CD8-positive, alpha-beta T cell (primary cell): ENCODE measurements at regions of chr19 and their contacts with region 1.

Region 1: GRCh38 chr19:43934985-43935708 is at the start of gene ZNF45:
- DNase-seq: peak; percentile 68 to 94 (median 88)
- ATAC-seq: peak; percentile 94
- H3K4me3 ChIP-seq: peak within 1 kb of the TSS; percentile 90 to 96
- H3K4me3 Mint-ChIP-seq: peak within 1 kb of the TSS; percentile 96
- H3K27ac ChIP-seq: peak within 1 kb of the TSS; percentile 59 to 85
- H3K27ac Mint-ChIP-seq: peak within 1 kb of the TSS; percentile 90
- H3K4me1 ChIP-seq: peaks cover 13% of the 10 kb centered on the region
- H3K4me1 Mint-ChIP-seq: peaks cover 27% of the 10 kb centered on the region
- H3K27me3 ChIP-seq: no peaks in the 10 kb centered on the region
- H3K27me3 Mint-ChIP-seq: peaks cover 2% of the 10 kb centered on the region
- CTCF ChIP-seq: no peak
- total RNA-seq, gene ZNF45: 6.2 to 7.8 TPM

Region 2: GRCh38 chr19:43901395-43902390 is 33.5 kb before region 1 on chr19:
- CTCF ChIA-PET with region 1: no interaction called
- POLR2A ChIA-PET with region 1: no interaction called
- intact Hi-C with region 1: loop called (anchors 1 to 2 kb)
- DNase-seq: peak; percentile 31 to 79 (median 65)
- ATAC-seq: peak; percentile 94
- H3K4me3 ChIP-seq: peak overlapping the region; percentile 55 to 78
- H3K4me3 Mint-ChIP-seq: peak overlapping the region; percentile 91
- H3K27ac ChIP-seq: no peak overlapping the region
- H3K27ac Mint-ChIP-seq: peak overlapping the region; percentile 82
- H3K4me1 ChIP-seq: no peaks in the 10 kb centered on the region
- H3K4me1 Mint-ChIP-seq: peaks cover 26% of the 10 kb centered on the region
- H3K27me3 ChIP-seq: no peaks in the 10 kb centered on the region
- H3K27me3 Mint-ChIP-seq: no peaks in the 10 kb centered on the region
- CTCF ChIP-seq: no peak

Region 3: DNA sequence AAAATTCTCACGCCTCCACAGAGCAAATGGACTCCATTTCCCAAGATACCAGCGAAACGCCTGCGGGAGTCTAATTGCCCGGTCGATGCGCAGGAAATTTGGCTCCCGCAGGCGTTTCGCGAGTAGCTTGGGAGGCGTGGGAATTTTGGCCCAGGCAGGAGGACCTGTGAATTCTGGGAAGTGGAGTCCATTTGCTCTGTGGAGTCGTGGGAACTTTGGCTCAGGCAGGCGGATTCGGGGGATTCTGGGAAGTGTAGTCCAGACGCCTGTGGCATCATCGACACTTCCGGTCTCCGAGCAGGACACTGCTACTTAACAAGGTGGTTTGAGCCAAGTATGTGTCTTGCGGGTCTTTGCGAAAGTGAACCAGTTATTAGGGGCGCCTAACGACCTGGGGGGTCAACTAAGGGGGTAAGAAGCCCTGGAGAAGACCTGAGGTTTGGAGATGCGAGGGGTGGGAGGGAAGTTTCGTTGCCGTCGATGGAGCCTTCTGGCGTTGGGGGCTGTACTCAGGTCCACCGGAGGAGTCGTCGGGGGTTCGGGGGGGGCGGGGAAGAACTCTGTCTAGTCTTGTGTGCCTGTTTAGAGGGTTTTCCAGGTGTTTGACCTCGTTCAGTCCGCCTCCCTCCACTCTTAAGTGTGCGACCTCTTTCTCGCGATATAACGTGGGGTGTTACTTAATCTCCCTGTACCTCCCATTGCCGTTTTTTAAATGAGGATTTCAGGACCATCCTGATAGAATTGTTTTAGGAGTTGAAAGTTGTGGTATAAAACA is 49.0 kb after region 1 on chr19 and contains the start of gene ZNF155:
- CTCF ChIA-PET with region 1: no interaction called
- POLR2A ChIA-PET with region 1: no interaction called
- intact Hi-C with region 1: loop called (anchors 1 kb)
- DNase-seq: peak; percentile 28 to 89 (median 64)
- ATAC-seq: peak; percentile 86
- H3K4me3 ChIP-seq: peak within 1 kb of the TSS; percentile 76 to 92
- H3K4me3 Mint-ChIP-seq: peak within 1 kb of the TSS; percentile 96
- H3K27ac ChIP-seq: peak within 1 kb of the TSS; percentile 61 to 65
- H3K27ac Mint-ChIP-seq: peak within 1 kb of the TSS; percentile 92
- H3K4me1 ChIP-seq: no peaks in the 10 kb centered on the region
- H3K4me1 Mint-ChIP-seq: peaks cover 15% of the 10 kb centered on the region
- H3K27me3 ChIP-seq: no peaks in the 10 kb centered on the region
- H3K27me3 Mint-ChIP-seq: no peaks in the 10 kb centered on the region
- CTCF ChIP-seq: no peak
- total RNA-seq, gene ZNF155: 3.4 to 3.5 TPM

Region 4: GRCh38 chr19:44025217-44025936 is 90.2 kb after region 1 on chr19 and contains the start of gene ZNF222:
- CTCF ChIA-PET with region 1: no interaction called
- POLR2A ChIA-PET with region 1: interaction called, 3 read pairs
- intact Hi-C with region 1: loop called in 1 of 2 experiments (anchors 5 kb)
- DNase-seq: peak; percentile 34 to 89 (median 75)
- ATAC-seq: peak; percentile 97
- H3K4me3 ChIP-seq: peak within 1 kb of the TSS; percentile 84 to 92
- H3K4me3 Mint-ChIP-seq: peak within 1 kb of the TSS; percentile 95
- H3K27ac ChIP-seq: peak within 1 kb of the TSS; percentile 47 to 61
- H3K27ac Mint-ChIP-seq: peak within 1 kb of the TSS; percentile 91
- H3K4me1 ChIP-seq: peaks cover 12% of the 10 kb centered on the region
- H3K4me1 Mint-ChIP-seq: peaks cover 30% of the 10 kb centered on the region
- H3K27me3 ChIP-seq: no peaks in the 10 kb centered on the region
- H3K27me3 Mint-ChIP-seq: peaks cover 1% of the 10 kb centered on the region
- CTCF ChIP-seq: no peak
- total RNA-seq, gene ZNF222: 7.7 TPM

Region 5: GRCh38 chr19:44071824-44072542 is 136.8 kb after region 1 on chr19 and contains the start of gene ZNF284:
- CTCF ChIA-PET with region 1: no interaction called
- POLR2A ChIA-PET with region 1: no interaction called
- intact Hi-C with region 1: loop called (anchors 1 kb)
- DNase-seq: peak; percentile 60 to 93 (median 83)
- ATAC-seq: peak; percentile 99
- H3K4me3 ChIP-seq: peak within 1 kb of the TSS; percentile 65 to 73
- H3K4me3 Mint-ChIP-seq: peak within 1 kb of the TSS; percentile 91
- H3K27ac ChIP-seq: peak within 1 kb of the TSS; percentile 2 to 59
- H3K27ac Mint-ChIP-seq: peak within 1 kb of the TSS; percentile 79
- H3K4me1 ChIP-seq: peaks cover 16% of the 10 kb centered on the region
- H3K4me1 Mint-ChIP-seq: peaks cover 36% of the 10 kb centered on the region
- H3K27me3 ChIP-seq: no peaks in the 10 kb centered on the region
- H3K27me3 Mint-ChIP-seq: no peaks in the 10 kb centered on the region
- CTCF ChIP-seq: no peak
- total RNA-seq, gene ZNF284: 0.64 to 1.2 TPM

Region 6: DNA sequence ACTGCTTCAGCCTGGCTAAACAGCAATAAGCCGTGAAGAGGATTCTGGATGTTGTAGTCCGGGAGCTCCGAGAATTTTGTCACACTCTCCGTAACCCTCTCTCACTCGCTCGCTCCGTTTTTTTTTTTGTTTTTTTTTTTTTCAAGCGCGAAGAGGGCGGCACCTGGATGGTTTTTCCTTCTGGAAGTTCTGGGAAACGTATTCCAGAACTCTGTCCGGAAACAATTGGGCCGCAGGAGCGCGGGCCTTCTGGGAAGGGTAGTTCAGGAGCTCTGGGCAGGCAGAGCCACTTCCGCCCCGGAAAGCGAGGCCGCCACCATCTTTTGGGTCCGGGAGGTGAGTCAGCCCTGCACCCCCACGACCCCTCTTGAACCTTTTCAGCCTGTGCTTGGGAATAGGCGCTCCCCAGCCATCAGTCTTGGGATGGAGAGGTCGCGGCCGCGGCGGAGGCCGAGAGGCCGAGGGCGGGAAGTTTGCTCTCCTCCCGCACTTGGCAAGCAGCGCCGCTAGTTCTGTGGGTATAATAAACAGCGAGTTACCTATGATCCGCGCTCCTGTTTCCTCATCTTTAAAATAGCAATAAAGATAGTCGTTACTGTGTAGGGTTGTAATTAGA is 277.2 kb after region 1 on chr19 and contains the start of gene ZNF227:
- CTCF ChIA-PET with region 1: no interaction called
- POLR2A ChIA-PET with region 1: interaction called, 4 read pairs
- intact Hi-C with region 1: loop called (anchors 1 to 2 kb)
- DNase-seq: peak; percentile 52 to 88 (median 81)
- ATAC-seq: peak; percentile 96
- H3K4me3 ChIP-seq: peak within 1 kb of the TSS; percentile 79 to 94
- H3K4me3 Mint-ChIP-seq: peak within 1 kb of the TSS; percentile 95
- H3K27ac ChIP-seq: peak within 1 kb of the TSS; percentile 75 to 81
- H3K27ac Mint-ChIP-seq: peak within 1 kb of the TSS; percentile 95
- H3K4me1 ChIP-seq: peaks cover 18% of the 10 kb centered on the region
- H3K4me1 Mint-ChIP-seq: peaks cover 32% of the 10 kb centered on the region
- H3K27me3 ChIP-seq: no peaks in the 10 kb centered on the region
- H3K27me3 Mint-ChIP-seq: no peaks in the 10 kb centered on the region
- CTCF ChIP-seq: no peak
- total RNA-seq, gene ZNF227: 22.6 to 23.0 TPM

Region 7: GRCh38 chr19:44500148-44500956 is 565.2 kb after region 1 on chr19 and contains the start of gene ZNF180:
- CTCF ChIA-PET with region 1: no interaction called
- POLR2A ChIA-PET with region 1: no interaction called
- intact Hi-C with region 1: loop called (anchors 1 kb)
- DNase-seq: peak; percentile 89 to 98 (median 96)
- ATAC-seq: peak; percentile 96
- H3K4me3 ChIP-seq: peak within 1 kb of the TSS; percentile 86 to 90
- H3K4me3 Mint-ChIP-seq: peak within 1 kb of the TSS; percentile 92
- H3K27ac ChIP-seq: peak within 1 kb of the TSS; percentile 60 to 77
- H3K27ac Mint-ChIP-seq: peak within 1 kb of the TSS; percentile 92
- H3K4me1 ChIP-seq: peaks cover 21% of the 10 kb centered on the region
- H3K4me1 Mint-ChIP-seq: peaks cover 34% of the 10 kb centered on the region
- H3K27me3 ChIP-seq: no peaks in the 10 kb centered on the region
- H3K27me3 Mint-ChIP-seq: peaks cover 10% of the 10 kb centered on the region
- CTCF ChIP-seq: peak; percentile 35
- total RNA-seq, gene ZNF180: 8.5 to 8.8 TPM